CD4-positive, alpha-beta memory T cell (primary cell): ENCODE measurements at regions of chr10 and their contacts with region 1.

Region 1: DNA sequence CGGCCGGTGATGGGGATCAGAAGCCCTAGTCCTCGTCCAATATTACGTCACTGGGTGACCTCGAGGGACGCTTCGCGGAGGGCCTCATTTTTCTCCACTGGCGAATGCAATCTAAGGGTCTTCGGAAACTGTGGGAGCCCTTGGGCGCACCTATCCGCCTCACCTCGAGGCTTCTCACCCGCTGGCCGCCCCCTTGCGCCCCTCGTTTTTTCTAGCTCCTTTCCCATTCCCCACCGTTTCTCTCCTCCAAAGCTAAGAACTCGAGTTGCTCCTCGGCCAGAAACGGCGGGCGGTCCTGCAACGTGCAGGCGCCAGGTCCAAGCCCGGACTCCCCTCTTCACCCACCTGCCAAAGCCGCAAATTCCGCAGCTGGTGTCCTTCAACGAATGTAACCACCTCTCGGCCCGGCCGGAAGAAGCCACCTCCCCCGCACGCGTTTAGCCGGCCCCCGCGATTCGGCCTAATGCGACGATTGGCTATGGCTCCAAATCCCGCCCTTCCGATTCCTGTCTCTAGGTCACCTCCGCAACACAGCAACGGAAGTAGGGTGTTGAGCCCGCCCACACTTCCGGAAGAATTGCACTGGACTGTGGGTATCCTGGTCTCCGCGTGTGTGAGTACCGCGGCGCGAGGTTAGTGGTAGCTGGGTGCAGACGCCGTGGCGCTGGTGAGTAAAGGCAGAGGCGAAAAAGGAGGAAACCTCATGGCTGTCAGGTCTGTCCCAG is at the starts of genes ATP5MK and PDCD11:
- DNase-seq: peak; percentile 91 to 97 (median 92)
- H3K4me3 ChIP-seq: peak within 1 kb of the TSS; percentile 87 to 91
- H3K4me3 Mint-ChIP-seq: peak within 1 kb of the TSS; percentile 97 to 100 (median 98)
- H3K27ac ChIP-seq: peak within 1 kb of the TSS; percentile 79
- H3K27ac Mint-ChIP-seq: peak within 1 kb of the TSS; percentile 82 to 99 (median 97)
- H3K4me1 ChIP-seq: peaks cover 44% of the 10 kb centered on the region
- H3K4me1 Mint-ChIP-seq: peaks cover 35 to 62% (median 47%) of the 10 kb centered on the region in 4 donors
- H3K27me3 ChIP-seq: no peaks in the 10 kb centered on the region
- H3K27me3 Mint-ChIP-seq: no peaks in the 10 kb centered on the region
- total RNA-seq, gene ATP5MK: 148 to 157 TPM
- total RNA-seq, gene PDCD11: 37.8 to 45.0 TPM

Region 2: GRCh38 chr10:102629661-102630614 is 766.3 kb before region 1 on chr10:
- CTCF ChIA-PET with region 1: no interaction called
- POLR2A ChIA-PET with region 1: no interaction called
- intact Hi-C with region 1: no loop called
- DNase-seq: no peak
- H3K4me3 ChIP-seq: no peak overlapping the region
- H3K4me3 Mint-ChIP-seq: no peak overlapping the region
- H3K27ac ChIP-seq: no peak overlapping the region
- H3K27ac Mint-ChIP-seq: no peak overlapping the region
- H3K4me1 ChIP-seq: peaks cover 32% of the 10 kb centered on the region
- H3K4me1 Mint-ChIP-seq: peaks cover 14 to 30% (median 25%) of the 10 kb centered on the region in 4 donors
- H3K27me3 ChIP-seq: no peaks in the 10 kb centered on the region
- H3K27me3 Mint-ChIP-seq: no peaks in the 10 kb centered on the region

Region 3: DNA sequence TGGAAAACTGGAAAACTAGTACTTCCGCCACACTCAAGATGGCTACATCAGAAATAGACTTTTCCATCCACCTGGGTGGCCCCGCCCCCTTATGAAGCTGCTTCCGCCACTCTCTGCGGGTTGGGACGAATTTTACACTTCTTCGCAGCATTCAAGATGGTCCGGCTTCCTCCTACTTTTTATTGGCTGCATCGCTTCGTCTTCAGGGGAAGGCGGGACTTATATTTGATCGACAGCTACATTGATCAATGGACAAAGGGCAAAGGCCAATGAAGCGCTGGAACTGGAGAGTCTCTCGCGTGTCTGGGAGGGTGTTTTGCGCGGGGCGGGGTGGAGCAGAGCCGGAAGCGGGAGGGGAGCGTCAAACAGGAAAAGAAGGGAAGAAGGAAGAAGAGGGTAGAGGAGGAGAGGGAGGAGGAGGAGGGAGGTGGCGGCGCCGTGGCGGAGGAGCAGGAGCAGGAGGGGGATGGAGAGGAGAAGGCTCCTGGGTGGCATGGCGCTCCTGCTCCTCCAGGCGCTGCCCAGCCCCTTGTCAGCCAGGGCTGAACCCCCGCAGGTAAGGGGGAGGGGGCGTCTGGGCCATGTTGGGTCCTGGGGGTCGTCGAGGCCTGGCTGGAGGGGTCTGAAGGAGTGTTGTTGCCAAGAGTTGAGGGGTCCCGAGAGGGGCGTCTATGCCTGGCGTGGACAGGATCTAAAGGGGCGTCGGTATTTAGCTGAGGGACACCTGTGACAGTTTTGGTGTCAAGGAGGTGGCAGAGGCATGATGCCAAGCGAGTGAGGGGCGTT is 652.4 kb before region 1 on chr10 and contains the start of gene WBP1L:
- CTCF ChIA-PET with region 1: no interaction called
- POLR2A ChIA-PET with region 1: no interaction called
- intact Hi-C with region 1: loop called (anchors 1 kb)
- DNase-seq: peak; percentile 95 to 98 (median 97)
- H3K4me3 ChIP-seq: peak within 1 kb of the TSS; percentile 79 to 96
- H3K4me3 Mint-ChIP-seq: peak within 1 kb of the TSS; percentile 90 to 99 (median 96)
- H3K27ac ChIP-seq: peak within 1 kb of the TSS; percentile 81
- H3K27ac Mint-ChIP-seq: peak within 1 kb of the TSS; percentile 69 to 99 (median 94)
- H3K4me1 ChIP-seq: peaks cover 35% of the 10 kb centered on the region
- H3K4me1 Mint-ChIP-seq: peaks cover 33 to 50% (median 42%) of the 10 kb centered on the region in 4 donors
- H3K27me3 ChIP-seq: no peaks in the 10 kb centered on the region
- H3K27me3 Mint-ChIP-seq: no peaks in the 10 kb centered on the region
- total RNA-seq, gene WBP1L: 39.3 to 41.1 TPM

Region 4: GRCh38 chr10:103278862-103279298 is 117.3 kb before region 1 on chr10:
- CTCF ChIA-PET with region 1: no interaction called
- POLR2A ChIA-PET with region 1: no interaction called
- intact Hi-C with region 1: no loop called
- DNase-seq: peak in 4 of 5 donors; percentile 20 to 33 (median 26)
- H3K4me3 ChIP-seq: no peak overlapping the region
- H3K4me3 Mint-ChIP-seq: peak overlapping the region; percentile 29 to 80 (median 64)
- H3K27ac ChIP-seq: no peak overlapping the region
- H3K27ac Mint-ChIP-seq: no peak overlapping the region
- H3K4me1 ChIP-seq: peaks cover 22% of the 10 kb centered on the region
- H3K4me1 Mint-ChIP-seq: peaks cover 3 to 21% (median 6%) of the 10 kb centered on the region in 4 donors
- H3K27me3 ChIP-seq: peaks cover 37% of the 10 kb centered on the region
- H3K27me3 Mint-ChIP-seq: peaks cover 21 to 47% of the 10 kb centered on the region in 2 donors

Region 5: DNA sequence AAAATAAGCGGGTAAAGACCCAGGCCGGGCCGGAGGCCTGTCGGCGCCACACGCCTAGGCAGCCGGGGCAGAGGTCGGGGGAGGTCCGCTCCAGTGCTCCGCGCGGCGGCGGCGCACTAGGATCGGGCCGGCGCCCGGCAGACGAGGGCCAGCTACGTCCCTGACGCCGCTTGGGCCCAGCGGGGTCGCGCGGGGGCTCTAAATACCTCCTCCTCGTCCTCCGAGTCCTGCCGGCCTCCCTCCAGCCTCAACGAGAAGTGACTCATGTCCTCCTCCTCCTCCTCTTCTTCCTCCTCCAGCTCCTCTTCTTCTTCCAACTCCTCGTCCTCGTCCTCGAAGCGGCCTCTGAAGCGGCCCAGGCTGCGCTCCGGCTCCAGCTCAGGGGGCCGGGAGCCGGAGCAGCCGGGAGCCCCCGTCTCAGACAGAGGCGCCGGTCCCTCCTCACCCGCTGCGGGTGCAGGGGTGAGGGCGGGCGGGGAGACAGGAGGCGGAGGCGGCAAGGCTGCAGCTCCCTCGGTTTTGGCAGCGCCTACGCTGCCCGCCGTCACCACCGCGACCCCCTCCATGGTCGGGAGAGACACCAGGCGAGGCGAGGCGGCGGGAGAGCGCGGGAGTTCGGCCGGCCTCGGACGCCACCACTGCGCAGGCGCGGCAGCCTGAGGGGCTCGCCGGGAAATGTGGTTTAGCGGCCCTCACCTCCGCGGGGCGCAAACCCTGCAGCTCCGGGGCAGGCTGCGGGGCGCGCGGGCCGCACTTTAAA is 45.5 kb before region 1 on chr10 and contains the start of gene PCGF6:
- CTCF ChIA-PET with region 1: interaction called, 4 read pairs
- POLR2A ChIA-PET with region 1: interaction called, 7 read pairs
- intact Hi-C with region 1: loop called (anchors 1 kb)
- DNase-seq: peak; percentile 56 to 76 (median 66)
- H3K4me3 ChIP-seq: peak within 1 kb of the TSS; percentile 42 to 83
- H3K4me3 Mint-ChIP-seq: peak within 1 kb of the TSS; percentile 84 to 94 (median 90)
- H3K27ac ChIP-seq: peak within 1 kb of the TSS; percentile 62
- H3K27ac Mint-ChIP-seq: peak within 1 kb of the TSS; percentile 81 to 94 (median 91)
- H3K4me1 ChIP-seq: peaks cover 19% of the 10 kb centered on the region
- H3K4me1 Mint-ChIP-seq: peaks cover 4 to 18% (median 9%) of the 10 kb centered on the region in 4 donors
- H3K27me3 ChIP-seq: no peaks in the 10 kb centered on the region
- H3K27me3 Mint-ChIP-seq: no peaks in the 10 kb centered on the region
- total RNA-seq, gene PCGF6: 8.7 to 8.8 TPM

Region 6: GRCh38 chr10:103367782-103368518 is 28.3 kb before region 1 on chr10 and contains the start of gene TAF5:
- CTCF ChIA-PET with region 1: no interaction called
- POLR2A ChIA-PET with region 1: interaction called, 30 read pairs
- intact Hi-C with region 1: loop called (anchors 1 kb)
- DNase-seq: peak; percentile 91 to 93 (median 91)
- H3K4me3 ChIP-seq: peak within 1 kb of the TSS; percentile 52 to 89
- H3K4me3 Mint-ChIP-seq: peak within 1 kb of the TSS; percentile 92 to 98 (median 96)
- H3K27ac ChIP-seq: peak within 1 kb of the TSS; percentile 79
- H3K27ac Mint-ChIP-seq: peak within 1 kb of the TSS; percentile 74 to 98 (median 95)
- H3K4me1 ChIP-seq: peaks cover 22% of the 10 kb centered on the region
- H3K4me1 Mint-ChIP-seq: peaks cover 11 to 25% (median 16%) of the 10 kb centered on the region in 4 donors
- H3K27me3 ChIP-seq: no peaks in the 10 kb centered on the region
- H3K27me3 Mint-ChIP-seq: no peaks in the 10 kb centered on the region
- total RNA-seq, gene TAF5: 7.5 to 7.9 TPM

Region 7: GRCh38 chr10:103678178-103678526 is 281.9 kb after region 1 on chr10:
- CTCF ChIA-PET with region 1: no interaction called
- POLR2A ChIA-PET with region 1: no interaction called
- intact Hi-C with region 1: loop called (anchors 10 kb)
- DNase-seq: peak; percentile 88 to 98 (median 91)
- H3K4me3 ChIP-seq: peak overlapping the region; percentile 42 to 56
- H3K4me3 Mint-ChIP-seq: peak overlapping the region; percentile 81 to 93 (median 88)
- H3K27ac ChIP-seq: peak overlapping the region; percentile 86
- H3K27ac Mint-ChIP-seq: peak overlapping the region; percentile 97 to 99 (median 98)
- H3K4me1 ChIP-seq: peaks cover 29% of the 10 kb centered on the region
- H3K4me1 Mint-ChIP-seq: peaks cover 10 to 27% (median 17%) of the 10 kb centered on the region in 4 donors
- H3K27me3 ChIP-seq: no peaks in the 10 kb centered on the region
- H3K27me3 Mint-ChIP-seq: no peaks in the 10 kb centered on the region

Region 8: DNA sequence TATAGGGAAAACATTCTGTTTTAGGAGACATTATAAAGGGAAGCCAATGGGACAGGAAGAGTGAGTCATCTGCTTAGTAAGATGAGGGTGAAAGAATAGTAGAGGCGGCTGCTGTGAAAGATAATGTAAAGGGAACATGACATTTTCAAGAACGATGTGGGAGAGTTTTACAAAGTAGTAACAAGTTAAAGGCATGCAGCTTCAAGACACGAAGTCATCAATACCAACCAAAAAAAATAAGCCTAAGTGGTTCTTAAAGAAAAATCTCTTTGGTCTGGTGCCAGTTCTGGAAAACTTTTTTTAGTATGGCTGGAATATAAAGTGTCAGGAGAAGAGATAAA is 864.5 kb after region 1 on chr10:
- CTCF ChIA-PET with region 1: no interaction called
- POLR2A ChIA-PET with region 1: no interaction called
- intact Hi-C with region 1: loop called (anchors 5 kb)
- DNase-seq: no peak
- H3K4me3 ChIP-seq: no peak overlapping the region
- H3K4me3 Mint-ChIP-seq: peak overlapping the region in 6 of 8 donors; percentile 12 to 34 (median 18)
- H3K27ac ChIP-seq: peak overlapping the region; percentile 17
- H3K27ac Mint-ChIP-seq: peak overlapping the region; percentile 48 to 90 (median 64)
- H3K4me1 ChIP-seq: peaks cover 95% of the 10 kb centered on the region
- H3K4me1 Mint-ChIP-seq: peaks cover 60 to 89% (median 76%) of the 10 kb centered on the region in 4 donors
- H3K27me3 ChIP-seq: no peaks in the 10 kb centered on the region
- H3K27me3 Mint-ChIP-seq: no peaks in the 10 kb centered on the region